MCF 10A (cell line): ENCODE measurements at regions of chr12 and their contacts with region 1.

Region 1: GRCh38 chr12:120356567-120357030 is 12.4 kb downstream of the MSI1 start:
- DNase-seq: peak; percentile 88
- H3K4me3 Mint-ChIP-seq: peak overlapping the region; percentile 24
- H3K27ac Mint-ChIP-seq: no peak overlapping the region
- H3K4me1 Mint-ChIP-seq: no peaks in the 10 kb centered on the region
- H3K27me3 Mint-ChIP-seq: peaks cover 11% of the 10 kb centered on the region
- CTCF ChIP-seq: peak; percentile 82

Region 2: GRCh38 chr12:120367233-120367923 is 10.8 kb after region 1 on chr12:
- CTCF ChIA-PET with region 1: interaction called, 33 read pairs
- POLR2A ChIA-PET with region 1: no interaction called
- intact Hi-C with region 1: no loop called
- DNase-seq: no peak
- H3K4me3 Mint-ChIP-seq: peak overlapping the region; percentile 19
- H3K27ac Mint-ChIP-seq: no peak overlapping the region
- H3K4me1 Mint-ChIP-seq: peaks cover 7% of the 10 kb centered on the region
- H3K27me3 Mint-ChIP-seq: peaks cover 54% of the 10 kb centered on the region
- CTCF ChIP-seq: peak; percentile 17

Region 3: DNA sequence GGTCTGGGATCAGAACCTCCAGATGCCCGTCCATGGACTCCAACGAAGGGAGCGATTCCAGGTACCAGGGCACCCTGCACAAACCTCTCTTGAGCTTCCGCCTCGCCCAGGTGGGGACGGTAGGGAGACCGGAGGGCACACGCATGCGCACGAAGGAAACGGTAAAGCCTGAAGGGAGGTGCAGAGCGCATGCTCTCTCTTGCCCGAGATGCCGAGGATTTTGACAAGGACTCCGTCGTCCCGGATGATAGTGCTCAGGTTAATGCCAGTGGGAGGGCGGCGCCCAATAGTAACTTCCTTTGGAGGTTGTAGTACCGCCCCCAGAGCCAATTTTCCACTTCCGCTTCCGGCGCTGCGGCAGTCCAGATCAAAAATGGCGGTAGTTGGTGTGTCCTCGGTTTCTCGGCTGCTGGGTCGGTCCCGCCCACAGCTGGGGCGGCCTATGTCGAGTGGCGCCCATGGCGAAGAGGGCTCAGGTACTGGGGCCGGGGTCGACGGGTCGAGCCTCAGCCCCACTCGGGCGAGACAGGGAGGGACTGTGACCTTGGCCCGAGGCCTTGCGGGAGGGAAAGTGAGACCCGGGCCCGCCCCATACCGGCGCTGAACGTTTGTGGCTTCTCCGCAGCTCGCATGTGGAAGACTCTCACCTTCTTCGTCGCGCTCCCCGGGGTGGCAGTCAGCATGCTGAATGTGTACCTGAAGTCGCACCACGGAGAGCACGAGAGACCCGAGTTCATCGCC is 81.3 kb after region 1 on chr12 and contains the start of gene COX6A1:
- CTCF ChIA-PET with region 1: interaction called, 20 read pairs
- POLR2A ChIA-PET with region 1: interaction called, 3 read pairs
- intact Hi-C with region 1: loop called (anchors 2 kb)
- DNase-seq: peak; percentile 98
- H3K4me3 Mint-ChIP-seq: peak within 1 kb of the TSS; percentile 98
- H3K27ac Mint-ChIP-seq: peak within 1 kb of the TSS; percentile 92
- H3K4me1 Mint-ChIP-seq: peaks cover 6% of the 10 kb centered on the region
- H3K27me3 Mint-ChIP-seq: no peaks in the 10 kb centered on the region
- CTCF ChIP-seq: no peak
- total RNA-seq, gene COX6A1: 475 and 518 TPM in 2 replicates